ENCODE measurements at regions of chr4 and their contacts with region 1.

Region 1: DNA sequence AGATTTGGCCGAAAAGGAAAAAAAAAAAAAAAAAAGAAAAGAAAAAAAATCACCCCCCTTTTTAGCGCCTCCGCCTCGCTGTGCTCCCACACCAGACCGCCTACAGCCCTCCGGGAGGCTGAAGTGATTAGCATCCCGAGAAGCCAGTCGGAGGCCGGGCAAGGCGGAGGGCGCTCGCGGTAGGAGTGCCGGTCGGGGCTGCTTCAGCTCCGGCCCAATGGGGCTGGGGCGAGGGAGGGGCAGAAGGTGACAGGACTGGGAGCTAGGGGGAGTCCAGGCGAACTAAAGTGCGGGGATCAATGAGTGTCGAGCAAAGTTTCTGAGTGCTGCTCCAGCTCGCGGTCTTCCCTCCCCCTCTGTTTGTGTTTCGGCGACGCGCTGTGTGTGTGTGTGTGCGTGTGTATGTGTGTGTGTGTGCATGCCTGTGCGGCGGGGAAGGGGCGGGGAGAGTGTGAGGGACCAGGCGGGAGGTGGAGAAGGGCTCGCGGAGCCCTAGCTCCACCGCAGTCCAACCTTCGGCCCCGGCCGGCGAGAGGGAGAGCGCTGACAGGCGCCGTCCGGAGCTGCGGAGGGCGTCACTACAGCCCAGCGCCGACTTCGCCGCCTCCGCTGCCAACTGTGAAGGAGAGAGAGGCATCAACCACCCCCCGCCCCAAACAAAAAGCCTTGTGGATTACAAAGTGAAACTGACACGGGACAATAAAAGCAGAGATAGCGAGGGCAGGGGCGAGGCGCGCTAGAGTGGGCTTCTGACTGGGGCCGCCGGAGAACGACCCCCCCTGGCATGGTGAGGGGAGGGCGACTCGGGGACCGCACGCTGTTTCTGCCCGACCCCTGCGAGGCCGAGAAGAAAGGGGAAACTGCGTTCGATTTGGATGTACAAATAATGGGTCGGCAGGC is at the start of gene FAT4:
- DNase-seq: no peak
- H3K4me3 Mint-ChIP-seq: peak within 1 kb of the TSS; percentile 84
- H3K27ac Mint-ChIP-seq: no peak within 1 kb of the TSS
- H3K4me1 Mint-ChIP-seq: peaks cover 12% of the 10 kb centered on the region
- H3K27me3 Mint-ChIP-seq: peaks cover 47% of the 10 kb centered on the region
- total RNA-seq, gene FAT4: not detected in 2 replicates

Region 2: GRCh38 chr4:125741825-125742452 is 427.0 kb after region 1 on chr4:
- intact Hi-C with region 1: loop called (anchors 5 kb)
- DNase-seq: no peak
- H3K4me3 Mint-ChIP-seq: no peak overlapping the region
- H3K27ac Mint-ChIP-seq: no peak overlapping the region
- H3K4me1 Mint-ChIP-seq: no peaks in the 10 kb centered on the region
- H3K27me3 Mint-ChIP-seq: no peaks in the 10 kb centered on the region

Region 3: DNA sequence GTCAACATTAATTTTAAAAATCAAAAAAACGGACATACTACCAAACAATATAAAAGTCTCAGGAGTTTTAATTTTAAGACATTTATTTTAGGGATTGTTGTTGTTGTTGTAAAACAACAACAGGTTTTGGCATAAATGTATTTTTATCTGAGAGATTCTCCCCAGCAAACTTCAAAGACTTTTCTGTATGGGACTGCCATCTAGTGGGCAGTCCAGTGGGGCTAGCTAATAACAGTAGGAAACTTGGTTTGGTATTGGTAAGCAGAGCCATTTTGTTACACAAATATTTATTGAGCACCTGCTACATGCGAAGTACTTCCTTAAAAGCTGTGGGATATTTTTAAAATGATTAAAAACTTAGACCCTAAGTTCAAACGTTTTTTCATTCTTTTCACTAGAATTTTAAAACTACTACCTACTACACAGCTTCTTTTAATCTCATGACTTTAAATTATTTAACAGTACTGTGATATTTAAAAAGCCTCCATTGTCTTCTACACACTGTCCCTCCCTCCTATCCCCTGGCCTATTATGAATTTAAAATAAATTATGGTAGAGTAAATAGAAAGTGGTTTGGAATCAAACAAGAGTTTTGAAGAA is 1289.4 kb after region 1 on chr4:
- intact Hi-C with region 1: loop called (anchors 5 kb)
- DNase-seq: no peak
- H3K4me3 Mint-ChIP-seq: no peak overlapping the region
- H3K27ac Mint-ChIP-seq: no peak overlapping the region
- H3K4me1 Mint-ChIP-seq: no peaks in the 10 kb centered on the region
- H3K27me3 Mint-ChIP-seq: no peaks in the 10 kb centered on the region